Naive thymus-derived CD4-positive, alpha-beta T cell (primary cell): ENCODE measurements at regions of chr2 and their contacts with region 1.

Region 1: GRCh38 chr2:27032495-27033252 is at the start of gene TMEM214:
- DNase-seq: peak; percentile 54 to 88 (median 63)
- ATAC-seq: peak; percentile 97
- H3K4me3 ChIP-seq: peak within 1 kb of the TSS; percentile 99
- H3K4me3 Mint-ChIP-seq: peak within 1 kb of the TSS; percentile 91 to 97 (median 93)
- H3K27ac ChIP-seq: peak within 1 kb of the TSS; percentile 87
- H3K27ac Mint-ChIP-seq: peak within 1 kb of the TSS; percentile 84 to 95 (median 91)
- H3K4me1 ChIP-seq: peaks cover 11 to 19% of the 10 kb centered on the region in 2 donors
- H3K4me1 Mint-ChIP-seq: peaks cover 24 to 63% (median 41%) of the 10 kb centered on the region in 7 donors
- H3K27me3 ChIP-seq: no peaks in the 10 kb centered on the region
- H3K27me3 Mint-ChIP-seq: no peaks in the 10 kb centered on the region
- total RNA-seq, gene TMEM214: 36.7 to 114 (median 67.5) TPM

Region 2: DNA sequence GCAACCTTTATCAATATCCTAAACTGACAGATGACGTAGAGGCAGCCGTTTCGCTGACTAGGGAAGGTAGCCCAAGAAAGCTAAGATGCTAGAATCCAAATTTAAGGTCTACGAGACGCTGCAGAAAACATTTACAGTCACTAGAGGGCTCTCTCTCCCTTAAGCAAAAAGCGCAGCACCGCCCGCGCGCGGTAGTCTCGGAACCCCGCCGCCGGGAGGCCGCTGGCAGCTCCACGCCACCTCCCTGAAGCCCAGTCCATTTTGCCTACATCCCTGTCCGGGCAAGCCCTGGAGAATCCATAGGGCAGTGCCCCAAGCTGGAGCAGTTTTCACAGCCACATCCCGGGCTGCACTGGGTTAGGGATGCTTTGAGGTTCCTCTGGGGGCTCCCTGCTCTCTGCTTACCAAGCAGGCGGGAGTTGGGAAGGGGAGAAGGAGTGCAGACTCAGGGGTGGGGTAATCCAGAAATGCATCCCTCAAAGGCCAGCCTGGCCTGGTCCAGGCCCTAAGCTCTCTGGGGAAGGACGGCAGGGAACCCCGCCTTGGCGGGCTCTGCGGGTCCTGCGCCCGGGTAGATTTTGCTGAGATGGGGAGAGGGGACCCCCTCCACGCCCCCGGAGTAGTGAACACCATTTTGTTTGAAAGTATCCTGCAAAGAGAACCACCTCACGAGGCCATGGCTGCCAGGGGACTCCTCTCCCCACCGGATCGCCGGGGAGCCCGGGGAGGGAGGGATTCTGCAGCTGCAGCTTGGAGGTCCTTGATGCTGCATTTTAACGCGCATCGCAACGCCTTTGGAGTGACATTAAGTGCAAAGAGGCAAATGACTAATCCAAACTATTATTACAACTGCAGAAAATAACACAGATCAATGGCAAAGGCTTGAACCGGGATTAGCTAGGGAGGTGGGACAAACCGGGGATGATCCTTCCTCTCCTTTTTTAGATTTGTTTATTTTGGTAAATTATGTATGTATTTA is 186.1 kb before region 1 on chr2:
- CTCF ChIA-PET with region 1: no interaction called
- POLR2A ChIA-PET with region 1: no interaction called
- intact Hi-C with region 1: no loop called
- DNase-seq: peak; percentile 38 to 67 (median 59)
- ATAC-seq: peak; percentile 84
- H3K4me3 ChIP-seq: no peak overlapping the region
- H3K4me3 Mint-ChIP-seq: peak overlapping the region; percentile 61 to 88 (median 78)
- H3K27ac ChIP-seq: no peak overlapping the region
- H3K27ac Mint-ChIP-seq: no peak overlapping the region
- H3K4me1 ChIP-seq: peaks cover 8 to 20% of the 10 kb centered on the region in 2 donors
- H3K4me1 Mint-ChIP-seq: peaks cover 3 to 20% (median 13%) of the 10 kb centered on the region in 7 donors
- H3K27me3 ChIP-seq: peaks cover 6 to 17% of the 10 kb centered on the region in 2 donors
- H3K27me3 Mint-ChIP-seq: peaks cover 44 to 58% (median 46%) of the 10 kb centered on the region in 5 donors

Region 3: GRCh38 chr2:26970244-26970920 is 62.3 kb before region 1 on chr2 and contains the start of gene MAPRE3:
- CTCF ChIA-PET with region 1: no interaction called
- POLR2A ChIA-PET with region 1: interaction called, 3 read pairs
- intact Hi-C with region 1: loop called (anchors 1 to 5 kb)
- DNase-seq: peak; percentile 71 to 93 (median 78)
- ATAC-seq: peak; percentile 93
- H3K4me3 ChIP-seq: peak within 1 kb of the TSS; percentile 89
- H3K4me3 Mint-ChIP-seq: peak within 1 kb of the TSS; percentile 83 to 97 (median 92)
- H3K27ac ChIP-seq: peak within 1 kb of the TSS; percentile 61
- H3K27ac Mint-ChIP-seq: peak within 1 kb of the TSS; percentile 56 to 96 (median 74)
- H3K4me1 ChIP-seq: peaks cover 0 to 12% of the 10 kb centered on the region in 2 donors
- H3K4me1 Mint-ChIP-seq: peaks cover 11 to 36% (median 25%) of the 10 kb centered on the region in 7 donors
- H3K27me3 ChIP-seq: no peaks in the 10 kb centered on the region
- H3K27me3 Mint-ChIP-seq: peaks cover 7 to 68% (median 13%) of the 10 kb centered on the region in 5 donors
- total RNA-seq, gene MAPRE3: 1.8 to 6.0 (median 4.5) TPM

Region 4: GRCh38 chr2:27079233-27080139 is 46.8 kb after region 1 on chr2:
- CTCF ChIA-PET with region 1: no interaction called
- POLR2A ChIA-PET with region 1: interaction called, 7 read pairs
- intact Hi-C with region 1: loop called (anchors 1 kb)
- DNase-seq: no peak
- ATAC-seq: no peak
- H3K4me3 ChIP-seq: no peak overlapping the region
- H3K4me3 Mint-ChIP-seq: no peak overlapping the region
- H3K27ac ChIP-seq: no peak overlapping the region
- H3K27ac Mint-ChIP-seq: peak overlapping the region in 4 of 9 donors; percentile 79 to 97 (median 96)
- H3K4me1 ChIP-seq: peaks cover 18 to 32% of the 10 kb centered on the region in 2 donors
- H3K4me1 Mint-ChIP-seq: peaks cover 27 to 53% (median 45%) of the 10 kb centered on the region in 7 donors
- H3K27me3 ChIP-seq: no peaks in the 10 kb centered on the region
- H3K27me3 Mint-ChIP-seq: no peaks in the 10 kb centered on the region

Region 5: GRCh38 chr2:27211829-27212627 is 179.4 kb after region 1 on chr2 and contains the starts of genes ATRAID and SLC5A6:
- CTCF ChIA-PET with region 1: no interaction called
- POLR2A ChIA-PET with region 1: interaction called, 3 read pairs
- intact Hi-C with region 1: loop called (anchors 1 to 5 kb)
- DNase-seq: peak; percentile 86 to 93 (median 92)
- ATAC-seq: peak; percentile 93
- H3K4me3 ChIP-seq: peak within 1 kb of the TSS; percentile 91
- H3K4me3 Mint-ChIP-seq: peak within 1 kb of the TSS; percentile 89 to 100 (median 99)
- H3K27ac ChIP-seq: peak within 1 kb of the TSS; percentile 100
- H3K27ac Mint-ChIP-seq: peak within 1 kb of the TSS; percentile 99 to 100 (median 100)
- H3K4me1 ChIP-seq: peaks cover 14 to 17% of the 10 kb centered on the region in 2 donors
- H3K4me1 Mint-ChIP-seq: peaks cover 18 to 49% (median 42%) of the 10 kb centered on the region in 7 donors
- H3K27me3 ChIP-seq: no peaks in the 10 kb centered on the region
- H3K27me3 Mint-ChIP-seq: no peaks in the 10 kb centered on the region
- total RNA-seq, gene ATRAID: 71.0 to 113 (median 90.7) TPM
- total RNA-seq, gene SLC5A6: 25.6 to 203 (median 44.3) TPM

Region 6: DNA sequence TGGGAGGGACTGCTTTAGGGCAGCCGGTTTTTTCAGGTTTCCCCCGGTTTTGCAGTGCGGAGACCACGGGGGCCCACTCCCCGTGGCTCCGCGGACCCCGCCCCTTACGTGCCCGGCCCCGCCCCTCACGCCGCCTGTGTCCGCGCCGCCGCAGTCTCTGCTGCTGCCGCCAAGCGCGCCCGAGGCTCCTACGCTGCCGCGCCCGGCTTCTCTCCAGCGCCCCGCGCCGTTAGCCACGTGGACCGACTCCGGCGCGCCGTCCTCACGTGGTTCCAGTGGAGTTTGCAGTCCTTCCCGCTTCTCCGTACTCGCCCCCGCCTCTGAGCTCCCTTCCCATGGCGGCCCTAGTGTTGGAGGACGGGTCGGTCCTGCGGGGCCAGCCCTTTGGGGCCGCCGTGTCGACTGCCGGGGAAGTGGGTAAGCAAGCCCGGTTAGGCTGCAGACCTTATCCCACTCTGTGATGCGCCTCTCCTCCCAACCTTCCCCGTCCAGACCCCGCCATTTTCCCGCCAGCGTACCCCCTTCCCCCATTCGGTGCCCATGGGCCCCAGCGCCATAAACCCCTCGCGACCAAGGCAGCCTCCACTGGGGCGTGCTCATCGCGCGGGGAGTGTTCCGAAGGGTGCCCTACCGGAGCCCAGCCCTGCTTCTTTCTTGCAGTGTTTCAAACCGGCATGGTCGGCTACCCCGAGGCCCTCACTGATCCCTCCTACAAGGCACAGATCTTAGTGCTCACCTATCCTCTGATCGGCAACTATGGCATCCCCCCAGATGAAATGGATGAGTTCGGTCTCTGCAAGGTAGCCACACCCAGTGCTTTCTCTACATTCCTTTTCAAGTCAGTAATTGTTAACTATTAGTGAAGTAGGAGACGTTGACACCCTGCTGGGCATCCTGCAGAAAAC is 184.8 kb after region 1 on chr2 and contains the start of gene CAD:
- CTCF ChIA-PET with region 1: no interaction called
- POLR2A ChIA-PET with region 1: no interaction called
- intact Hi-C with region 1: loop called (anchors 1 to 5 kb)
- DNase-seq: peak; percentile 71 to 90 (median 80)
- ATAC-seq: peak; percentile 87
- H3K4me3 ChIP-seq: peak within 1 kb of the TSS; percentile 68
- H3K4me3 Mint-ChIP-seq: peak within 1 kb of the TSS; percentile 90 to 98 (median 96)
- H3K27ac ChIP-seq: peak within 1 kb of the TSS; percentile 85
- H3K27ac Mint-ChIP-seq: peak within 1 kb of the TSS; percentile 86 to 96 (median 94)
- H3K4me1 ChIP-seq: peaks cover 19 to 24% of the 10 kb centered on the region in 2 donors
- H3K4me1 Mint-ChIP-seq: peaks cover 26 to 52% (median 45%) of the 10 kb centered on the region in 7 donors
- H3K27me3 ChIP-seq: no peaks in the 10 kb centered on the region
- H3K27me3 Mint-ChIP-seq: no peaks in the 10 kb centered on the region
- total RNA-seq, gene CAD: 34.4 to 65.7 (median 45.4) TPM

Region 7: DNA sequence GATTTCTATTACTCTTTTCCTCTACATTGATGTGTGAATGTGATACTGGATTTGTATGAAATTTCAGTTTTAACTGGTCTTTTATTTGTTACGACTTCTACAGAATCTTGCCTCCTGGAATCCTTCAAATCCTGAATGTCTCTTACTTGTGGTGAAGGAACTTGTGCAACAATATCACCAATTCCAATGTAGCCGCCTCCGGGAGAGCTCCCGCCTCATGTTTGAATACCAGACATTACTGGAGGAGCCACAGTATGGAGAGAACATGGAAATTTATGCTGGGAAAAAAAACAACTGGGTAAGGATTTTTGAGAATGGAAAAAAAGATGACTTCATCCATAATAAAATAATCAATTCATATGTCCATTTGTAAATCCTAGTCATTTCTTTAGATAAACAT is 992.4 kb after region 1 on chr2:
- CTCF ChIA-PET with region 1: no interaction called
- POLR2A ChIA-PET with region 1: no interaction called
- intact Hi-C with region 1: no loop called
- DNase-seq: no peak
- ATAC-seq: no peak
- H3K4me3 ChIP-seq: no peak overlapping the region
- H3K4me3 Mint-ChIP-seq: no peak overlapping the region
- H3K27ac ChIP-seq: no peak overlapping the region
- H3K27ac Mint-ChIP-seq: peak overlapping the region in 1 of 9 donors; percentile 28
- H3K4me1 ChIP-seq: no peaks in the 10 kb centered on the region
- H3K4me1 Mint-ChIP-seq: peaks cover 0 to 4% (median 0%) of the 10 kb centered on the region in 7 donors
- H3K27me3 ChIP-seq: no peaks in the 10 kb centered on the region
- H3K27me3 Mint-ChIP-seq: no peaks in the 10 kb centered on the region